ENCODE measurements at regions of chr20 and their contacts with region 1.

Region 1: GRCh38 chr20:48657475-48658470 is 170.0 kb downstream of the PREX1 start:
- DNase-seq: peak; percentile 23
- H3K4me3 ChIP-seq: no peak overlapping the region
- H3K27ac ChIP-seq: no peak overlapping the region
- H3K4me1 ChIP-seq: no peaks in the 10 kb centered on the region
- H3K27me3 ChIP-seq: peaks cover 40% of the 10 kb centered on the region
- CTCF ChIP-seq: peak; percentile 90 to 94 (median 91)

Region 2: GRCh38 chr20:48597405-48598302 is 60.1 kb before region 1 on chr20:
- dilution Hi-C with region 1: no loop called
- DNase-seq: no peak
- H3K4me3 ChIP-seq: no peak overlapping the region
- H3K27ac ChIP-seq: no peak overlapping the region
- H3K4me1 ChIP-seq: no peaks in the 10 kb centered on the region
- H3K27me3 ChIP-seq: no peaks in the 10 kb centered on the region
- CTCF ChIP-seq: no peak

Region 3: DNA sequence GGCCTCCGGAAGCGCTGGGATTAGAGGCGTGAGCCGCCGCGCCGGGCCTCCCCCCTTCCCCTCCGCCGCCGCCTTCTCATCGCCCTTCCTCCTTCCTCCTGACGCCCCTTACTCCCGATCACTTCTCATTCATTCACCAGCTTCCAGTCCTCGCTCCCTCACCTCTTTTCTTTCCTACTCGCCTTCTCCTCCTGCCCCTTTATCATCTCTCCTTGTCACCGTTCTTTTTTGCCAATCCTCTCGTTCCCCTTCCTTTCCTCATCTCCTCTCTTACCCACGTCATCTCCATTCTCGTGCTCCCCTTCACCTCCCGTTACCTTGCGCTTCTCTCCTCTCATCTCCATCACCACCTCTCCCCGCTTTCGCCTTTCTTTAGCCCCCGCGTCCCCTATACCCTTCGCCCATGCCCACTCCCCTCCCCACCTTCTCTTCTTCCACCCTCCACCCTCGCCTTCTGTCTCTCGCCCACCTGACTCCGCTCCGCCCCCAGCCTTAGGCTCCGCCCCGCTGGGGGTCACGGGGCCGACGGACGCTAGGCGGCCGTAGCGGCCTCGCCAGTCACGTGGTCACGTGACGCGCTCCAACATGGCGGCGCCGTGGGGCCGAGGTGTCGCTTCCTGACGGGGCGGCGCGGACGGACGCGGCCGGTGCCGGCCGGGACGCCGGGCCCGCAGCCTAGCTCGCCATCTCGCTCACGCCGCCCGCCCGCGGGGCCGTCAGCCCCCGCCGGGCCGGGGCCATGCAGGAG is 263.6 kb after region 1 on chr20 and contains the start of gene ARFGEF2:
- dilution Hi-C with region 1: loop called (anchors 25 kb)
- DNase-seq: no peak
- H3K4me3 ChIP-seq: peak within 1 kb of the TSS; percentile 60 to 95 (median 73)
- H3K27ac ChIP-seq: peak within 1 kb of the TSS; percentile 86
- H3K4me1 ChIP-seq: peaks cover 19% of the 10 kb centered on the region
- H3K27me3 ChIP-seq: no peaks in the 10 kb centered on the region
- CTCF ChIP-seq: peak in 1 of 3 experiments; percentile 28
- polyA plus RNA-seq, gene ARFGEF2: 14.8 to 19.2 TPM (median 16.0 TPM) in 3 replicates